ENCODE measurements at regions of chr7 and their contacts with region 1.

Region 1: GRCh38 chr7:67928141-67928540 is 931.5 kb downstream of the TYW1 start:
- DNase-seq: no peak
- H3K4me3 ChIP-seq: no peak overlapping the region
- H3K27ac ChIP-seq: no peak overlapping the region
- H3K4me1 ChIP-seq: no peaks in the 10 kb centered on the region
- H3K27me3 ChIP-seq: no peaks in the 10 kb centered on the region
- CTCF ChIP-seq: no peak
- POLR2A ChIP-seq: no peak

Region 2: DNA sequence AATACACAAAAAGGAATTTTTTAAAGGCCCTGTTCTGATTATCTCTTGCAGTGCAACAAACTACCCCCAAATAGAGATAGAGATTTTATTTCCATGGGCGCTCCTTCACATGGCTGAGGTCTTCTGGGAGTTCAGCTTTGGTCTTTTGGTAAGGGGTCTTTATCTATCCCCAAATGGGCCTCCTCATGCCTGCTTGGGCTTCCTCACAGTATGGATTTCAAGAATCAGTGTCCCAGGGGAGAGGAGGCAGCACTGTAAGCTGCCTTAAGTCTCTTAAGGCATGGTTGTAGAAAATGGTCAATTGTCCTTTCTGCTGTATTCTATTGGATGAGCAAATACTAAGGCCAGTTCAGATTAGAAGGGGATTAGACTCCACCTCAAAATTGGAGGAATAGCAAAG is 34.7 kb after region 1 on chr7:
- intact Hi-C with region 1: no loop called
- DNase-seq: no peak
- H3K4me3 ChIP-seq: no peak overlapping the region
- H3K27ac ChIP-seq: no peak overlapping the region
- H3K4me1 ChIP-seq: no peaks in the 10 kb centered on the region
- H3K27me3 ChIP-seq: no peaks in the 10 kb centered on the region
- CTCF ChIP-seq: no peak
- POLR2A ChIP-seq: no peak

Region 3: GRCh38 chr7:69438584-69439412 is 1510.7 kb after region 1 on chr7:
- intact Hi-C with region 1: loop called (anchors 5 kb)
- DNase-seq: peak in 1 of 2 donors; percentile 21
- H3K4me3 ChIP-seq: peak overlapping the region in 1 of 3 donors; percentile 35
- H3K27ac ChIP-seq: peak overlapping the region; percentile 41 to 63
- H3K4me1 ChIP-seq: no peaks in the 10 kb centered on the region
- H3K27me3 ChIP-seq: no peaks in the 10 kb centered on the region
- CTCF ChIP-seq: no peak
- POLR2A ChIP-seq: no peak

Measured in breast epithelium (tissue), 4 donors.